ENCODE measurements at regions of chr1 and their contacts with region 1.

Region 1: DNA sequence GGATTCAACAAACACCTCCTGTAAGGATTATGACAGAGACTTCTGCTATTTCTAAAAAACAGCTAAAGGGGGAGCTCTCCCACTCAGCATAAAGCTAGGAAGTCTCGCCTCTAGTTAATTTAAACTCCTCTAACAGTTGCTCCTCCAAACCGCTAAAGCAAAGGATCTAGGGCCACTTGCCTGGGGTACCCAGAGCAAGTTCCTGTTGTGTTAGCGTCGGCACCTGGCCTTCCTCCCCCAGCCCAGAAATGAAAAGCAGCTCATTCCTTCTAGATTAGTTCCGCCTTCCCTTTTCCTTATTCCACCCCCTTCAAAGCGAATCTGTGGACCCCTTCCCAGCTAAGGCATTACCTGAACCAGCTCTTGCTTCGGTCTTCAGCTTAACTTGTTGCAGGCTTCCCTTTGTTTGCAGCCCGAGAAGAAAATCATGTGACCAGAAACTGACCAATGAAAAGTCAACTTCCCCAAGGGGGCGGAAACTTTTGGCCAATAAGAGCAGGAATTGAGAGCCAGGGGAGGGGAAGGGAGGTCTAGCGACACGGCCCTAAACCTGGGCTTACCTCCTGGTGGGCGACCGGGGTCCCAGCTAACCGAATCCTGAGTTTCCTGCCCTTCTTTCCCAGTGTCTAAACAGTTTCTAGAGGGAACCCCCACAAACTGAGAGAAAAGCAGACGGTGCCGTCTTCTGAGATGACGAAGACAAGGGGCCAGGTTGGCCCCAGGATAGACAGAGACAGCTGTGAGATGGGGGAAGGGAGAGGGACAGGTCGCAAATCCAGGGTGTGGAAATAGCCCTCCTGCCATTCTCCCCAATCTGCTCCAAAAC is at the start of gene PBXIP1:
- DNase-seq: peak; percentile 92
- ATAC-seq: peak; percentile 82
- H3K4me3 ChIP-seq: peak within 1 kb of the TSS; percentile 81
- H3K27ac ChIP-seq: peak within 1 kb of the TSS; percentile 72
- H3K4me1 ChIP-seq: peaks cover 39% of the 10 kb centered on the region
- H3K27me3 ChIP-seq: no peaks in the 10 kb centered on the region
- CTCF ChIP-seq: peak; percentile 9 to 40 (median 22); a peak in 4 of 6 replicates
- EP300 ChIP-seq: no peak
- POLR2A ChIP-seq: peak; percentile 68
- RAD21 ChIP-seq: peak; percentile 25; the same call in 1 of the 2 replicates
- polyA plus RNA-seq, gene PBXIP1: 0.63 to 2.0 TPM

Region 2: DNA sequence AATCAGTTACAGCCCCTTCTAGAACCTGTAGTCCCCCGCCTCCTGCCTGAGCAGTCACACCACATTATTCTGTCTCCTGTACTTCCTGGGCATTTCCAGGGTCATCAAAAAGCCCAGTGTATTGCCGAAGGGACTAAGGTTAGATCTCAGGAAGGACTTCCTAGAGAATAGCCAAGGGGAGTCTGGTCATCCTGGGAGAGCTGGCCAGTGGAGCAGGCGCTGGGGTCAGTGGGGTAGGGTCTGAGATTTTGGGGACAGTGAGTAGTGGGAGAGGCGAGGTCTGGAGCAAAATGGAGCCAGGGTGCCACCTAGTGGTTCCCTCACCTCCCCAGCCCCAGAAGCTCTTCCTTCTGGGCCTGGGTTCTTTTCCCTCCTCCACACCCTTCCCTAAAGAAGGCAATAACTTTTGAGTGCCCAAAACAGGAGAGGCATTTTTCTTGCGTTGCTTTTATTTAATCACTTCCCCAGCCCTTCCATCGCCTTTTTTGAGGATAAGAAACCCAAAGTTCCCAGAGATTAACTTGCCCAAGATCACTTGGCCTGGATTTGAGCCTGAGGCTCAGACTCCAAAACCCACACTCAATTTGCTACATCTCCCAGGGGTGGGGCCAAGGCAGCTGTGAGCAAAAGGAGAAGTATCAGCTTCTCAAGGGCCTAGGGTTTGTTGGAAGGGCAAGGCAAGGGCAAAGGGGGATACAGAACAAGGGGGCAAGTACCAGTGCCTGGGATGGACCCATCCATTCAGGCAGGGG is 12.1 kb before region 1 on chr1:
- CTCF ChIA-PET with region 1: interaction called, 16 read pairs
- POLR2A ChIA-PET with region 1: interaction called, 19 read pairs
- RAD21 ChIA-PET with region 1: interaction called, 13 read pairs
- SMC1A ChIA-PET with region 1: interaction called, 6 read pairs
- in situ Hi-C with region 1: no loop called
- intact Hi-C with region 1: no loop called
- DNase-seq: no peak
- ATAC-seq: peak; percentile 37
- H3K4me3 ChIP-seq: peak overlapping the region; percentile 77
- H3K27ac ChIP-seq: peak overlapping the region; percentile 100
- H3K4me1 ChIP-seq: peaks cover 63% of the 10 kb centered on the region
- H3K27me3 ChIP-seq: no peaks in the 10 kb centered on the region
- CTCF ChIP-seq: peak; percentile 88 to 90 (median 89)
- EP300 ChIP-seq: no peak
- POLR2A ChIP-seq: no peak
- RAD21 ChIP-seq: peak; percentile 71

Region 3: GRCh38 chr1:154974063-154974807 is 18.3 kb after region 1 on chr1 and contains the start of gene CKS1B:
- CTCF ChIA-PET with region 1: interaction called, 14 read pairs
- POLR2A ChIA-PET with region 1: interaction called, 140 read pairs
- RAD21 ChIA-PET with region 1: interaction called, 16 read pairs
- SMC1A ChIA-PET with region 1: interaction called, 21 read pairs
- in situ Hi-C with region 1: no loop called
- intact Hi-C with region 1: no loop called
- DNase-seq: peak; percentile 100
- ATAC-seq: peak; percentile 87
- H3K4me3 ChIP-seq: peak within 1 kb of the TSS; percentile 90
- H3K27ac ChIP-seq: peak within 1 kb of the TSS; percentile 96
- H3K4me1 ChIP-seq: peaks cover 28% of the 10 kb centered on the region
- H3K27me3 ChIP-seq: no peaks in the 10 kb centered on the region
- CTCF ChIP-seq: no peak
- EP300 ChIP-seq: no peak
- POLR2A ChIP-seq: peak; percentile 85
- RAD21 ChIP-seq: no peak
- polyA plus RNA-seq, gene CKS1B: 598 to 608 TPM

Region 4: GRCh38 chr1:154994591-154994990 is 38.7 kb after region 1 on chr1:
- CTCF ChIA-PET with region 1: interaction called, 20 read pairs
- POLR2A ChIA-PET with region 1: interaction called, 10 read pairs
- RAD21 ChIA-PET with region 1: interaction called, 9 read pairs
- SMC1A ChIA-PET with region 1: interaction called, 8 read pairs
- in situ Hi-C with region 1: no loop called
- intact Hi-C with region 1: no loop called
- DNase-seq: no peak
- ATAC-seq: no peak
- H3K4me3 ChIP-seq: no peak overlapping the region
- H3K27ac ChIP-seq: no peak overlapping the region
- H3K4me1 ChIP-seq: peaks cover 12% of the 10 kb centered on the region
- H3K27me3 ChIP-seq: no peaks in the 10 kb centered on the region
- CTCF ChIP-seq: no peak
- EP300 ChIP-seq: no peak
- POLR2A ChIP-seq: no peak
- RAD21 ChIP-seq: no peak

Region 5: DNA sequence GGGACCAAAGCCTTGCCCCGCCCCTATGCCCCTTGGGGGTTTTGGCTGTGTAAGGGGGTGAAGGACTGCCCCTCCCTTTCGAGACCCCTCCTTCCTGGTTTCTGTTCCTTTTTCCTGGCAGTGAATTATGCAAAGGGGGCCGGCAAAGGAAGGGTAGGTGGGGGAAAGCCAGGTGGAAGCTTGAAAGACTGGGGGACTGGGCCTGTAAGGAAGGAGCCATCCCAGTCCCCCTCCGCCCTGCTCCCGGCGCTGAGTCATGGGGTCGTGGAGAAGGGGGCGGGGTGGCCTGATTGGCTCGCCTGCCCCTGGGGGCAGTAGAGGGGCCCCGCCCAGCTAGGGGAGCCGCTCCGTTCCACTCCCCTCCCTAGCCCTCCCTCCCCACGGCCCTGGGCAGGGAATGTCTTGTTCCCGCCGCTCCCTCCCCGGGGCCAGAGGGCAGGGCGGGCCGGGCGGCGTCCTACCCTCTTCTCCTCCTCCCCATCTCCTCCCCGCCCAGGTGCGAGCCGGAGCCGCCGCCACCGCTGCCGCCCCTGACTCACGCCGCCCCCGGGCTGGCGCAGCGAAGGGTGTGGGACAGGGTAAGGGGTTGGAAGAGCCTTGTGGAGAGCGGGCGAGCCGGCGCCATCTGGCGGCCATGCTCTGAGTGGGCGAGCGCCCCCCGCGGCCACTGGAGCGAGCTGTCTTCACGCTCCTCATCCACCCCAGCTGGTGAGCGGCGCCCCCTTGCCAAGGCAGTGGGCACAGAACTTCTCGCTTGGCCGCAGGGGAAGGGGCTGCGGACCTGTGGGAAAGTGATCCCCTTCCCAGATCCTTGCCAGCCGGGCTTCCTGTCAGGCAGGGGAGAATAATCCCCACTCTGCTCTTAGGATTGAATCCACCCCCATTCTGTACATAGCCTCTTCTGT is 61.4 kb after region 1 on chr1:
- CTCF ChIA-PET with region 1: interaction called, 10 read pairs
- POLR2A ChIA-PET with region 1: interaction called, 4 read pairs
- RAD21 ChIA-PET with region 1: interaction called, 3 read pairs
- SMC1A ChIA-PET with region 1: interaction called, 11 read pairs
- in situ Hi-C with region 1: no loop called
- intact Hi-C with region 1: no loop called
- DNase-seq: peak; percentile 47
- ATAC-seq: peak; percentile 98
- H3K4me3 ChIP-seq: peak overlapping the region; percentile 65
- H3K27ac ChIP-seq: peak overlapping the region; percentile 75
- H3K4me1 ChIP-seq: peaks cover 23% of the 10 kb centered on the region
- H3K27me3 ChIP-seq: no peaks in the 10 kb centered on the region
- CTCF ChIP-seq: peak; percentile 99 to 100 (median 100); a peak in 5 of 6 replicates
- EP300 ChIP-seq: 0 out of 4 replicates have a peak, but pooled peaks of 1 of the 2 experiments have one; percentile 26
- POLR2A ChIP-seq: peak; percentile 69
- RAD21 ChIP-seq: peak; percentile 64

Measured in GM12878 (cell line).